ENCODE measurements at regions of chr5 and their contacts with region 1.

Region 1: DNA sequence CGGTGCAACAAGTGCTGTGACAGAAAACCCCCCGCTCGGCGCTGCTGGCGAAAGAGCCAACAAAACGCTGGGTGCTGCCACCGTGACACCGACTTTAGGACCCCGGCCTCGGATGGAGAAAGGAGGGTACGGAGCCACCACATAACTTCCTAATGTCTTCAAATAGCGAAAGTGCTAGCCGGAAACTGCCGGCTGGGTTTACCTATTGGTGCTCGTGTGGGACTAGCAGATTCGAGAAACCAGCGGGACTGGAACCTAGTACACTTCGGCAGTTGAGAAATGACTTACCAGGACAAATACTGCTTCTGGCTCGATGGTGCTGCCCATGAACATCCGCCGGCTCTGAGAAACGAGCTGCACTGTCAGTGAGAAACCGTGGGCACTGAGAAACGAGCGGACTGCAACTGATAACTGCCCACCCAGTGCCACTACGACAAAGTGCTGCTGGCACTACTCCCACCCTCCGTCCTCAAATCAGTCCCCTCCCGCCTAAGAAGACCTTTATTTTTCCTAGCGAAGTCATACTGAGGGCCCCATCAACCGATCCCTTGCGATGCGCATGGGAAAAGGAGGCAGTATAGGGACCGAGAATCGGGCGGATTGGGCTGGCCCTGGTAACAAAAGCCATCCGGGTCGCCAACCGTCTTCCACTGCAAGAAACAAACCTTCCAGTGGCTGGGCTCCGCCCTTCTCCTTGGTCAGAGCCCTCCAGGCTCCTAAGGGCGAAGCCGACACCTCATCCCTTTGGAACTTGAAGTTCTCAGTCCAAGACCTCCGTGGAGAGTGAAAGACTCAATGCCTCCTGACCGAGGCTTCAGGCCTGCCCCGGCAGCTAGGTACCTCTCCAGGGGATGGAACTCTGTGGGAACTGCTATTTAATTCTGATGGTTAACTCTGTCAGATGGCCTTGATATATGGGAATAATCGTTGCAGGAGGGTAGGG is 27.0 kb upstream of the ANXA2R start:
- DNase-seq: peak; percentile 83 to 93
- ATAC-seq: peak; percentile 68 to 84 (median 72)
- H3K4me3 ChIP-seq: peak overlapping the region; percentile 70 to 93 (median 80)
- H3K27ac ChIP-seq: peak overlapping the region; percentile 98 to 100 (median 100)
- H3K4me1 ChIP-seq: peaks cover 6 to 49% (median 32%) of the 10 kb centered on the region in 9 donors
- H3K27me3 ChIP-seq: no peaks in the 10 kb centered on the region
- CTCF ChIP-seq: peak in 1 of 9 donors; percentile 16

Region 2: GRCh38 chr5:42994246-42995151 is 72.6 kb before region 1 on chr5:
- intact Hi-C with region 1: loop called in 3 of 10 experiments (anchors 1 to 2 kb)
- DNase-seq: peak; percentile 80 to 93
- ATAC-seq: peak; percentile 62 to 84 (median 80)
- H3K4me3 ChIP-seq: peak overlapping the region; percentile 53 to 76 (median 64)
- H3K27ac ChIP-seq: peak overlapping the region; percentile 66 to 100 (median 96)
- H3K4me1 ChIP-seq: peaks cover 0 to 63% (median 16%) of the 10 kb centered on the region in 9 donors
- H3K27me3 ChIP-seq: peaks cover 0 to 100% (median 91%) of the 10 kb centered on the region in 7 donors
- CTCF ChIP-seq: peak; percentile 69 to 90 (median 86)

Region 3: DNA sequence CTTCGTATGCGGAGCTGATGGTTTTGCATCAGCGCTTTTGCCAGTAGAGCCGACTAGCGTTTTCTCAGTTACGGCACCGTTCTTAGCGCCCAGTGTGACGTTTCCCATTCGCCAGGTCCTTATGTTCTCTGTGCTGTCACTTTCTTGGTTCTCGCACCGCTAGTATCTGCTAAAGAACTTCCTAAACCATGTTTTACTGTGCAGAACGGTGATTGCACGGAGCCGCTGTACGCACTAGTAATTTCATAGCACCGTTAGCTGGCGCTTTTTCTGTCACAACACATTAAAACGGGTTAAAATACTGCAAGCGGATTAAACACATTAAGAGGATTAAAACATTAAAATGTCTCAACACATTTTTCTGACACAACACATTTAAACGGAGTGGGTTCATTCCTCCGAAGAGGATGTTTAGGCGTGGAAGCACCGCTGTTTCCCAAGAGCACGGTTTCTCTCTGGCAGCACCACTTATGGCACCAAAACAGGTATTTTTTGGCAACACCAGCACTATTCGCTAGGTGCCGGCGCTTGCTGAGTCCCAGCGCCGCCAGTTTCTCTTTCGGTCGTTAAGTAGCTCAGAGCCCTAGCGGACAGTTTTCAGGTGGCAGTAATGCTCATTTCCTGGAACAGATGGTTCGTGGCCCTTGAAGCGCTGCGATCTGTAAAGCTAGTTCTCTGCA is 47.3 kb before region 1 on chr5:
- intact Hi-C with region 1: loop called in 1 of 10 experiments (anchors 2 kb)
- DNase-seq: peak; percentile 40 to 71
- ATAC-seq: peak; percentile 35 to 53 (median 46)
- H3K4me3 ChIP-seq: peak overlapping the region; percentile 36 to 69 (median 58)
- H3K27ac ChIP-seq: peak overlapping the region; percentile 62 to 97 (median 95)
- H3K4me1 ChIP-seq: peaks cover 0 to 42% (median 17%) of the 10 kb centered on the region in 9 donors
- H3K27me3 ChIP-seq: peaks cover 0 to 87% (median 55%) of the 10 kb centered on the region in 7 donors
- CTCF ChIP-seq: peak in 8 of 9 donors; percentile 18 to 56 (median 47)

Region 4: DNA sequence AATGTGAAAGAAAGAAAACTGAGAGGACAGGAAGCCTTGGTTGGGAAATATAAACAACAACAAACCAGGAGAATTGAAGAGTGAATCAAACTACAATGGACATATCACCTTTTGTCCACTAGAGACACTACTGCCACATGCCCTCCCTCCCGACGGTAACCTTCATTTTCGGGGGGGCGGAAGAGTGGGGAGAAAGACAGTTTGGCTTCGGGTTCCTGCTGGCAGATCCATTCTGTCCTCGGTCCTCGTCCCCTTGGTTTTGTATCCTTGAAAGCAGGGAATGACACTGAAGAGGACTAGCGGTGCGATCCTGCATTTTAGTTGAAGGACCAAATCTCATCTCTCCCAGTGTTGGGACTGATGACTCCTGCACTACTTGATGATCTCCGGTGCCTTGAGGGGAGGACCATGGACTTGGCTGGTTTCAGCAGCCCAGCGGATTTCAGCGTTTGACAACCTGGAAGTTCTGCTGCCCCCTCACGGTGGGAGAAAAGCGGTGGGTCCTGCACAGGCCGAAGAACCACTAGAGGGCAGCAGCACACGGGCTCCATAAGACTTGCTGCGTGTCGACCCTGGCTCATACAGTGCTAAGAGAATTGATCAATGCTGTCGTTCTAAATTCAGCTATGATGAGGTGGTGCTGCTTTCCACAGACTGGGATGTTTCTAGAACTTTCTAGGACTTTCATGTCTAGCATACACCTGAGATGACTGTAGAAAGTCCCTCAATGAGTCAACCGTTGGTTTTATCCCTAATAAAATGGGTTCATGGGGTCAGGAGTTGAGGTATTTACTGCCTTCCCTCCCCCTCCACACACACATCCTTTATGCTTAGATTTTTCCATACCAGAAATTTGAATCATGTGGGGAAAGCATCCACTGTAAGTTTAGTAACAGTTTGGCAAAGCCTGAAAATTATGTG is 38.6 kb after region 1 on chr5:
- intact Hi-C with region 1: loop called in 4 of 10 experiments (anchors 5 kb)
- DNase-seq: peak; percentile 87 to 90
- ATAC-seq: peak; percentile 90 to 97 (median 95)
- H3K4me3 ChIP-seq: peak overlapping the region in 9 of 10 donors; percentile 26 to 58 (median 48)
- H3K27ac ChIP-seq: peak overlapping the region in 9 of 10 donors; percentile 42 to 76 (median 53)
- H3K4me1 ChIP-seq: peaks cover 0 to 10% (median 5%) of the 10 kb centered on the region in 9 donors
- H3K27me3 ChIP-seq: no peaks in the 10 kb centered on the region
- CTCF ChIP-seq: peak; percentile 97 to 100 (median 100)

Region 5: DNA sequence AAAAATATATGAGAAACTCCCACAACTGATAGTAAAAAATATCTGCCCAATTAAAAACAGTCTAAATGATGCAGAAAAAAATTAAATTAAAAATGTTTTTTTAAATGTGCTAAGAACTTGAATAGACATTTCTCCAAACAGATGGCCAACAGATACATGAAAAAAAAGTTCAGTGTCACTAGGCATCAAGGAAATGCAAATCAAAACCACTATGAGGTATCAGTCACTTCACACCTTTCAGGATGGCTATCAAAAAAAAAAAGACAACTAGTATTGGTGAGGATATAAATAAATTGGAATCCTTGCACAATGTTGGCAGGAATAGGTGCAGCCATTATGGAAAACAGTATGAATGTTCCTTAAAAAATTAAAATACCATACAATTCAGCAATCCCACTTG is 70.3 kb after region 1 on chr5:
- intact Hi-C with region 1: no loop called
- DNase-seq: no peak
- ATAC-seq: no peak
- H3K4me3 ChIP-seq: no peak overlapping the region
- H3K27ac ChIP-seq: no peak overlapping the region
- H3K4me1 ChIP-seq: peaks cover 0 to 19% (median 7%) of the 10 kb centered on the region in 9 donors
- H3K27me3 ChIP-seq: no peaks in the 10 kb centered on the region
- CTCF ChIP-seq: no peak